ENCODE measurements at regions of chr9 and their contacts with region 1.

Region 1: DNA sequence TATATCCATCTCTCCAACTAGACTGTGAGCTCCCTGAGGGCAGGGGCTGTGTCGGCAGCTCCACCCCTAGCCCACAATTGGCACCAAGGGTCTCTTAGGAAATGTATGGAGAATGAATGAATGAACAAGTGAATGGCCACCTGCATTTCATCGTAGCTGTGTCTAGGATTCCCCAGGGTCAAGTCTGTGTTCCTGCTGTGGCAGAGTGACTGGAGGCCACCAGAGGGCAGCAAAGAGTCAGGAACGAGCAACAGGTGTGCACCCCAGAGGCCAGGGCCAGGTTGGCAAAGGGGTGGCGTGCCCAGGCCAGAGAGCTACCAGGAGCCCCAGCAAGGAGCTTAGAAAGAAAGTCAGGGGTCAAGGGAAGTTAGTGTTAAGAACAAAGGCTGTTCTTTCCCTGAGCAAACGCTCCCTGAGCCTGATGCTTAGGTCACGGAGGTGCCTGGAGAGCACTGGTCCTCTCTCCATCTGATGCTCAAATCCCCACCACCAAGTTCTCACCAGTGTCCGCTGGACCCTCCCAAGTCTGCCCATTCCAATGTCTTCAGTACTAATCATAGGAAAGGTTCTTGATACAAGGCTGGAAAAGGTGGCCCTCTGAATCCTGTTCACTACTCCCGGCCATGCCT is 160.7 kb downstream of the PAX5 start:
- DNase-seq: peak; percentile 11 to 83 (median 58)
- ATAC-seq: peak; percentile 74 to 89 (median 78)
- H3K4me3 ChIP-seq: no peak overlapping the region
- H3K4me3 Mint-ChIP-seq: no peak overlapping the region
- H3K27ac ChIP-seq: no peak overlapping the region
- H3K27ac Mint-ChIP-seq: no peak overlapping the region
- H3K4me1 ChIP-seq: no peaks in the 10 kb centered on the region
- H3K4me1 Mint-ChIP-seq: no peaks in the 10 kb centered on the region
- H3K27me3 ChIP-seq: peaks cover 0 to 19% of the 10 kb centered on the region in 2 experiments
- H3K27me3 Mint-ChIP-seq: peaks cover 2 to 4% of the 10 kb centered on the region in 2 donors

Region 2: DNA sequence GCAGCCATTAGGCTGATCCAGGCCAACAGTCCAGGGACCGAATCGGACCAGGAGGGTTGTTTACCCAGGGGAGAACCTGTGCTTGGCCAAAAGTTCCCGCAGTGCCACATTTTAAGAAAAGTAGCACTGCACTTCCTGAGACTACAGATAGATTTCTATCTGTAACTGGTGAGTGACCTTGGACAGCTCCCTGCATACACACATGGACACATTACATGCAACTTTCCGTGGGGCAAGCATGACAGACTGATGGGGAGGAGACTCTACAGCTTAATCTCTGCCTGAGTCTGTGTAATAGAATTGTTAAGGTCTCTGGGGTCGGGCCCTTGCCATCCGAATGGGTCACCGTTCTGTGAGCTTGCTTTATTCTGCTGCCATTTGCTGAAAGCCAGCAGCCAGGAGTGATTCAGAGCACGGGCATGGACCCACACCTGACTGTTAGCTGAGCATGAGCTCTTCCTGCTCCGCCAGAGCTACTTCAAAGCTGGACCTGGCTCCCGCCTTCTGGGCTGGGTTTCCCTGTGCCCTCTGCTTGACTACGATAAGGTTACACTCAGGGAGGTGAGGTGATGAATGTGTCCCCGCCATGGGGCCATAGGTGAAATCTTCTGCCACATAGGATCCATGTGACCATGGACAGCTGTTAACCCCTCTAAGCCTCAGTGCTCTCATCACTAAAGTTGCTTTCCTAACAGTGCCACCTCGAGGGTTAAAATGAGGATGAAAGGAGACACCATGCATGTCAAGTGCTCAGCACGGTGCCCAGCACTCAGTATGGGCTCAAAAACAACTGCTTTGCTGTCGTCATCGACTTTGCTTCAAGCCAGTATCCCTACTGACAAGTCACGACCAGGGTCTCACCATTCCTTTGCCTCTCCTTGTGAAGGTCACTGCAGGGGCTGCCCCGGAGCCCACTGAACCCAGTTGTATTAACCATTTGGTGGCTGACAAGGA is 100.6 kb before region 1 on chr9:
- CTCF ChIA-PET with region 1: no interaction called
- POLR2A ChIA-PET with region 1: no interaction called
- DNase-seq: peak in 1 of 35 experiments; percentile 10
- ATAC-seq: peak in 1 of 4 experiments; percentile 35
- H3K4me3 ChIP-seq: no peak overlapping the region
- H3K4me3 Mint-ChIP-seq: no peak overlapping the region
- H3K27ac ChIP-seq: no peak overlapping the region
- H3K27ac Mint-ChIP-seq: no peak overlapping the region
- H3K4me1 ChIP-seq: no peaks in the 10 kb centered on the region
- H3K4me1 Mint-ChIP-seq: peaks cover 0 to 6% (median 0%) of the 10 kb centered on the region in 3 donors
- H3K27me3 ChIP-seq: peaks cover 0 to 33% of the 10 kb centered on the region in 2 experiments
- H3K27me3 Mint-ChIP-seq: peaks cover 51% of the 10 kb centered on the region in 2 donors

Region 3: GRCh38 chr9:36924071-36924470 is 50.7 kb after region 1 on chr9:
- CTCF ChIA-PET with region 1: interaction called in 1 of 2 experiments, 12 read pairs
- POLR2A ChIA-PET with region 1: no interaction called
- DNase-seq: no peak
- ATAC-seq: no peak
- H3K4me3 ChIP-seq: no peak overlapping the region
- H3K4me3 Mint-ChIP-seq: no peak overlapping the region
- H3K27ac ChIP-seq: no peak overlapping the region
- H3K27ac Mint-ChIP-seq: no peak overlapping the region
- H3K4me1 ChIP-seq: no peaks in the 10 kb centered on the region
- H3K4me1 Mint-ChIP-seq: peaks cover 0 to 3% (median 0%) of the 10 kb centered on the region in 3 donors
- H3K27me3 ChIP-seq: peaks cover 0 to 14% of the 10 kb centered on the region in 2 experiments
- H3K27me3 Mint-ChIP-seq: peaks cover 12 to 16% of the 10 kb centered on the region in 2 donors

Region 4: GRCh38 chr9:37329576-37329975 is 456.2 kb after region 1 on chr9:
- CTCF ChIA-PET with region 1: interaction called, 9 to 15 read pairs
- POLR2A ChIA-PET with region 1: no interaction called
- DNase-seq: peak in 8 of 35 experiments; percentile 0 to 52 (median 6)
- ATAC-seq: no peak
- H3K4me3 ChIP-seq: no peak overlapping the region
- H3K4me3 Mint-ChIP-seq: no peak overlapping the region
- H3K27ac ChIP-seq: no peak overlapping the region
- H3K27ac Mint-ChIP-seq: no peak overlapping the region
- H3K4me1 ChIP-seq: no peaks in the 10 kb centered on the region
- H3K4me1 Mint-ChIP-seq: peaks cover 0 to 4% (median 0%) of the 10 kb centered on the region in 3 donors
- H3K27me3 ChIP-seq: no peaks in the 10 kb centered on the region
- H3K27me3 Mint-ChIP-seq: no peaks in the 10 kb centered on the region